Ascending aorta (tissue), 2 donors: ENCODE measurements at regions of chr20 and their contacts with region 1.

Region 1: DNA sequence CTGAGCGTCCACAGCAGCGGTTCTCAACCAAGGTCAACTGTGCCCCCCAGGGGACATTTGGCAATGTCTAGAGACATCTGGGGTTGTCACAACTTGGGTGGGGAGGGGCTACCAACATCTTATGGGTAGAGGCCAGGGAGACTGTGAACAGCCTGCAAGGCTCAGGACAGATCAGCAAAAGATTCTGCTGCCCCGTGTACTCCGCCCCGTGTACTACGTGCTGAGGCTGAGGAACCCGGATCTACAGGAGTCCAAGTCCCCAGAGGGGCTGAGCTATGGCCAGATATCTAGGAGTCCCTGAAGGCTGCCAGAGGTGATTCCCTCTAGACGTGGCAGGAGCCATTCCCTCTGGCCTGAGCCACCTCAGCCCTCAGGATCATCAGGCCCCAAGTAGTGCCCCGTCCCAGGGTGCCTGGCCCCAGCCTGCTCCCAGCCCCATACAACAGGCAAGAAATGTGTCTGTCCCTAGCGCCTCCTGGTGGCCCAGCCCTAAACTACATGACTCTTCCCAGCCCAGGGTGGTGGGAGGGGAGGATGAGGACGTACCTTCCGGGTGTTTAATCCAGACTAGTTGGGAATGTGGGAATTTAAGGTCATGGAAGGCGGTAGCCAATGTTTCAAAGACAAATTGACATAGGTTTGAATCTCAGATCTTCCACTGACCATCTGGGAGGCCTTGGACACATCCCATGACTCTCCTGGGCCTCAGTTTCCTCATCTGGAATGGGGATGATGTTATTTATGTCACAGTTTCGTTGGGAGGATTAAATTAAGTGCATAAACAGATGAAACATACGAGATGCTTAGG is 49.5 kb upstream of the PTPN1 start:
- DNase-seq: peak; percentile 58 to 96
- H3K4me3 ChIP-seq: no peak overlapping the region
- H3K27ac ChIP-seq: peak overlapping the region; percentile 17 to 53
- H3K4me1 ChIP-seq: peaks cover 3 to 23% of the 10 kb centered on the region in 2 donors
- H3K27me3 ChIP-seq: no peaks in the 10 kb centered on the region
- CTCF ChIP-seq: peak; percentile 94 to 98 (median 96)

Region 2: DNA sequence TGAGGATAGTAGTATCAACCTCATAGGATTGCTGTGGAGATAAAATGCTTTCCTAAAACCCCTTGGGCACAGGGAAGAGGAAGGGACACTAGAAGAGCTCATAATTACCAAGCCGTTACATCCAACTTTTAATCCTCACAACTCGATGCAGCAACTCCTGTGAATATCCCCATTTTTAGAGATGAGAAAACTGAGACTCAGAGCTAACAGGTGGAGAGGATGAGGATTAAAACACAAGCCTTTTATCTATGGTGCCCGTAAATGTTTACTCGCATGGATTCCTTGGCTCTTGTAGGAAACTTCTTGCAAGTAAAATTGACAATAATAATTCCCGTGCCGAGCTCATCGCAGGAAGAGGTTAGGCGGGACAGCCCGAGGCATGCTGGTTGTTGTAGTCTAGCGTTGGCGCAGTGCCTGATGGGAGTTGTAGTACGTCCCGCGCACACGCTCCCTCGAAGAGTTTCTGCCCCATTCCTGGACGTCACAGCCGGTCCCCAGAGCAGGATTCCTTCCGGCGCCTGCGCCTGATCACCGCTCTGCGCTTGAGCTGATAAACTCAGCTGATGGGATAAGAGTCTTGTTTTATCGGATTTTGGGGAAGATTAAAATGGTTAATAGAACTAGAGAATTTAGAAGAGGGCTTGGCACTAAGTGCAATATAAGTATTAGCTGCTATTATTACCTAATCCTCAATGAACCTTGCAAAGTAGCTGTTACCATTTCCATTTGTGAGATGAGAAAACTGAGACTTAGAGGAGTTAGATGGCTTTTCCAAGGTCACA is 344.9 kb before region 1 on chr20:
- intact Hi-C with region 1: loop called (anchors 5 kb)
- DNase-seq: peak; percentile 89 to 98
- H3K4me3 ChIP-seq: peak overlapping the region; percentile 54 to 66
- H3K27ac ChIP-seq: peak overlapping the region; percentile 70 to 71
- H3K4me1 ChIP-seq: peaks cover 5 to 31% of the 10 kb centered on the region in 2 donors
- H3K27me3 ChIP-seq: no peaks in the 10 kb centered on the region
- CTCF ChIP-seq: no peak

Region 3: DNA sequence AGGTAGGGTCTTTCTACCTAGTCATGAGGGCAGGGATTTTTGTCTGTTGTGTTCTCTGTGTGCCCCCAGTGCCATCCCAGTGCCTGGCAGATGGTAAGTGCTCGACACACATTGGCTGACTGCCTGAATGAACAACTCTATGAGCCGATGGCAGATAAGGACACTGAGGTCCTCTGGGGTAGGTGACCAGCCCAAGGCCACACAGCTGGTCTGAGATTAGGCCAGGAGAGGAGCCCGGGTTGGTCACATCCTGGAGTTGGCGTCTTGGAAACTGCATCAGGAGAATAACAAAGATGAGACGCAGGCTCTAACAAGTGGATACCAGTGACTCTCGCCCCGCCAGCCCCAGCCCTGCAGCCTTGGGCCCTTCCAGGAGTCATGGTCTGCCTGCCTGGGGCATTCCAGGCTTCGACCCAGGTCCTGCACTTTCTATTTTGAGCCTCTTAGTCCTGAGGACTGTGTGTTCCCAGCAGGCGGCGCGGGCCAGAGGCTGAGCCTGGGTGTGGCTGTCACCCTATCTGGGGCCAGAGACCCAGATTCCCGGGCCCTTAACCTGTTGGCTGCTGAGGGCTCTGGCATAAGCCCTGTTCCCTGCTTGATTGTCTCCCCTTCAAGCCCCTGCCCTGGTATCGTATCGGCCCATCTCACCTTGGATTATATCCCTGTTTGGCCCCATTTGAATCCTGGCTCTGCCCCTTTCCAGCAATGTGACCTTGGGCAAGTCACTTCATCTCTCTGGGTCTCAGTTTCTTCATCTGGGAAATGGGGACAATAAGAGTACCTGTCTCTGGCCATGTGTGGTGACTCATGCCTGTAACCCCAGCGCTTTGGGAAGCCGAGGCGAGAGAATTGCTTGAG is 181.8 kb before region 1 on chr20:
- intact Hi-C with region 1: loop called (anchors 5 kb)
- DNase-seq: peak in 1 of 2 donors; percentile 90
- H3K4me3 ChIP-seq: no peak overlapping the region
- H3K27ac ChIP-seq: peak overlapping the region; percentile 58
- H3K4me1 ChIP-seq: peaks cover 4 to 14% of the 10 kb centered on the region in 2 donors
- H3K27me3 ChIP-seq: no peaks in the 10 kb centered on the region
- CTCF ChIP-seq: peak; percentile 33 to 48 (median 43)

Region 4: GRCh38 chr20:50379049-50379990 is 81.3 kb before region 1 on chr20:
- intact Hi-C with region 1: loop called (anchors 1 kb)
- DNase-seq: peak; percentile 78 to 97
- H3K4me3 ChIP-seq: peak overlapping the region in 1 of 2 donors; percentile 36
- H3K27ac ChIP-seq: peak overlapping the region; percentile 65 to 81
- H3K4me1 ChIP-seq: peaks cover 8 to 37% of the 10 kb centered on the region in 2 donors
- H3K27me3 ChIP-seq: no peaks in the 10 kb centered on the region
- CTCF ChIP-seq: no peak